Transverse colon (tissue), 4 donors: ENCODE measurements at regions of chr1 and their contacts with region 1.

Region 1: GRCh38 chr1:9477975-9478374 is 61.3 kb upstream of the SLC25A33 start:
- DNase-seq: no peak
- H3K4me3 ChIP-seq: no peak overlapping the region
- H3K27ac ChIP-seq: no peak overlapping the region
- H3K4me1 ChIP-seq: peaks cover 0 to 3% (median 2%) of the 10 kb centered on the region in 4 donors
- H3K27me3 ChIP-seq: no peaks in the 10 kb centered on the region
- CTCF ChIP-seq: no peak
- EP300 ChIP-seq: no peak
- POLR2A ChIP-seq: no peak

Region 2: GRCh38 chr1:8560611-8561544 is 917.1 kb before region 1 on chr1:
- in situ Hi-C with region 1: no loop called
- intact Hi-C with region 1: no loop called
- DNase-seq: no peak
- H3K4me3 ChIP-seq: no peak overlapping the region
- H3K27ac ChIP-seq: no peak overlapping the region
- H3K4me1 ChIP-seq: peaks cover 0 to 15% (median 3%) of the 10 kb centered on the region in 4 donors
- H3K27me3 ChIP-seq: no peaks in the 10 kb centered on the region
- CTCF ChIP-seq: peak; percentile 89 to 95 (median 93)
- EP300 ChIP-seq: no peak
- POLR2A ChIP-seq: no peak

Region 3: DNA sequence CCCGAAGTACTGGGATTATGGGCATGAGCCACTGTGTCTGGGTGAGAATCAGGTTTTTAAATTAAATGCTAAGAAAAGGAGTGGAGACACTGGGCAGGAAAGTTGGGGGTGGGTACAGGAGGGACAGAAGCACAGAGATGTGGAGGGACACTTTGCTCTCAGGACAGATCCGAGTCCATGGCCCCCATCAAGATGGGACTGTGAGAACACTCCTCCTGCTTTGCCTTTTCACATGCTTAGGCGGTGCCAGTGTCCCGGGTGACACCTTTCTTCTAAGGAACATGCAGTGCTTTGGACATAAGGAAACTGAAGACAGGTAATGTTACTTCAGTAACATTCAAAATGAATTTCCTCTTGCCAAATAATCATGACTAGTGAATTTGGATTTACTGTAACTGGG is 78.0 kb after region 1 on chr1:
- in situ Hi-C with region 1: no loop called
- intact Hi-C with region 1: loop called (anchors 2 kb)
- DNase-seq: no peak
- H3K4me3 ChIP-seq: no peak overlapping the region
- H3K27ac ChIP-seq: peak overlapping the region; percentile 34 to 60 (median 53)
- H3K4me1 ChIP-seq: peaks cover 6 to 34% (median 13%) of the 10 kb centered on the region in 4 donors
- H3K27me3 ChIP-seq: no peaks in the 10 kb centered on the region
- CTCF ChIP-seq: no peak
- EP300 ChIP-seq: no peak
- POLR2A ChIP-seq: no peak